ENCODE measurements at regions of chr6 and their contacts with region 1.

Region 1: GRCh38 chr6:7910654-7911344 is at the start of gene TXNDC5:
- DNase-seq: peak; percentile 88

Region 2: DNA sequence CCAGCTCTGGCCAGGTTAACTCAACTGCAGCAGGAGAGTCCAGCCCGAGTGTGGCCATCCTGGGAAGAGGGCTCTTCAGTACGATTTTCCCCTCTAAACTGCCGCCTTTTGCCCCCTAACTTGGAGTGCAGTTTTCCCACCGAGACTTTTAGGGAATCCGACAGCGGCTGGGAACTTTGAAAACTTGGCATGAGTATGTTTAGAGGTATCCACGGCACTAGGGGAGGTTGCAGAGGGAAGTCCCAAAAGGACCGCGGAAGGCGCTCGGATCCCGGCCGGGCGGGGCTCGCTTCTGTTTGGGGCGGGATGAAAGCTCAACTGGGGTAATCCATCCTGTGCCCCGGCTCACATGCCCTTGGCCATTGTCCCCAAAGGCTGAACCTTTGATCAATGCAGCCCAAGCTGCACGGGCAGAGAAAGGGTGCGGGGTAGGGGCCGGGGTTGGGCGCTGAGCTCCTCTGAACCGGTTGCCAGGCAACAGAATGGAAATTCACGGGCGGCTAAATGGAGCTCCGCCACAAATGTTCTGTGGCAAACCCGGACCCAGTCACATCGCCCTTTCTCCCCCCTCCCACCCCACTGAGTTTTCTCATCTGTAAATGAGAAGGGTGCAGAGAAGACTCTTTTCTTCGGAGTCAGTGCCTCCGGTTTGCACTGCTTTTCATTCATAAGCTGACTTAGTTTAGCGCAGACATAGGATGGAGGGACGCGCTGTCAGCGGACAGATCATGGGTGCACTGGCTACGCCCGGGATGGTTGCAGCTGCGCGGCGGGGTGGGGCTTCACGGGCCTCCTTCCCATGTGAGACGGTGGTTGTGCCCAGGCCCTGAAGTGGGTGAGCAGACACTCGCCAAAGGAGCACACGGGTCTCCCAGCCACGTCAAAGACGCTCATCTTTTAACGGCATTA is 182.6 kb before region 1 on chr6:
- CTCF ChIA-PET with region 1: interaction called, 3 read pairs
- POLR2A ChIA-PET with region 1: interaction called, 10 read pairs
- DNase-seq: peak; percentile 42

Region 3: DNA sequence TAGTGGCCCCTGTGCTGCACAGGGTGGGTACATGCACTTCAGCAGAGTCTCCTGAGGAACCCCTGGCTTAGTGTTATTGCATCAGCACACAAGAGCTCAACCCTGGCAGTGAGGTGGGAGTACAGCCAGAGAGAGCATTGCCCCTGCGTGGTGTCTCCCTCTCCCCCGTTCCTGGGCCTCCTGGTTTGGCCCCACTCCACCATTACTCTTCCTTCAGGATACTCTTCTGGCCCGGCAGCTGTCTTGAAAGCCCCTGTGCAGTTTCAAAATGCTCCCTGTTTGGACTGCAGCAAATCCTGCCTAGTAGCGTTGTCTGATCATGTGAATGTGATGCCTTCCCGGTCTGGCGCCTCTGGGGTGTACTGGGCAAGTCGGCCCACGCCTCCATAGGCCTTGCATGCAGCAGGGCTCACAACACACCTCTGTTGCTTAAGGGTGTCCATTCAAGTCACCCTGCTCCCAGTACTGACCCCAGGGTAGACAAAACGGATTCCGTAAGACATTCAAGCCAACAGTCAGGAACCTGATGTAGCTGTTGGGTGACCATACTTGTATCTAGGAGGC is 32.3 kb before region 1 on chr6:
- CTCF ChIA-PET with region 1: no interaction called
- POLR2A ChIA-PET with region 1: no interaction called
- DNase-seq: no peak

Measured in HEK293T (cell line).